ENCODE measurements at regions of chr10 and their contacts with region 1.

Region 1: DNA sequence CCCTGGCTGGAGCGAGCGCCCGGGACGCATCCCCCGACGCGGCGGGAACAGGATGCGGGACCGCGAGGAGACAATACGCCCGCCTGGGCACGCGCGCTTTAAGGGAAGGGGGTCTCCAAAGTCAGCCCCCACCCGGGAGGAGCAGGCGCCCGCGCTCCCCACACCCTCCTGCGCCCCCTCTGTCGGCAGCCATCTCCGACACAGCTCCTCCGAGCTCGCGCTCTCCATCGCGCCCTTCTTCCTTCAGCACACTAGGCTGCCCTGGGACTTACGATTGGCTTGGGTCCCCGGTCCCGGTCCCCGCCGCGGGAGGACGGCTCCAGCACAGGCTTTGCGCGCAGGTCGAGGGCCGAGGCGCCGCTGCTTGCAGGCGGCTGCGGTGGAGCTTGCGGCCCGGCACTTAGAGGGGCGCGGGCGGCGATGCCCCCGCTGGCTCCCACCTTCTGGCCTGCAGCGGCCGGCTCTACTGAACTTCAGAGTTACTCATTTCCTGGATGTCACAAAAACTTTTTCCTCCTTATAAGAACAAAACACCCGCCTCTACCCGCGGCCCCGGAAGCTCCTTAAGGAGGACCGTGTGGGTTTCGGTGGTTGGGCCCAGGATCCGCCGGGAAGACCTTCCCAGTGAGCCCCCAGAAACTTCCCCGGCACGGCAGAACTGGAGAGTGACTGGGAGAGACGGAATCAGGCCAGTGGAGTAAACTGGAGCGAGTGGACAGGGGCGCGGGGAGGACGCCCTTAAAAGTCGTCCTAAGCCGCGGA is at the start of gene ITPRIP:
- DNase-seq: peak; percentile 78
- H3K4me3 Mint-ChIP-seq: peak within 1 kb of the TSS; percentile 84
- H3K27ac Mint-ChIP-seq: peak within 1 kb of the TSS; percentile 98
- H3K4me1 Mint-ChIP-seq: peaks cover 46% of the 10 kb centered on the region
- H3K27me3 Mint-ChIP-seq: no peaks in the 10 kb centered on the region
- total RNA-seq, gene ITPRIP: 24.5 to 25.3 TPM

Region 2: DNA sequence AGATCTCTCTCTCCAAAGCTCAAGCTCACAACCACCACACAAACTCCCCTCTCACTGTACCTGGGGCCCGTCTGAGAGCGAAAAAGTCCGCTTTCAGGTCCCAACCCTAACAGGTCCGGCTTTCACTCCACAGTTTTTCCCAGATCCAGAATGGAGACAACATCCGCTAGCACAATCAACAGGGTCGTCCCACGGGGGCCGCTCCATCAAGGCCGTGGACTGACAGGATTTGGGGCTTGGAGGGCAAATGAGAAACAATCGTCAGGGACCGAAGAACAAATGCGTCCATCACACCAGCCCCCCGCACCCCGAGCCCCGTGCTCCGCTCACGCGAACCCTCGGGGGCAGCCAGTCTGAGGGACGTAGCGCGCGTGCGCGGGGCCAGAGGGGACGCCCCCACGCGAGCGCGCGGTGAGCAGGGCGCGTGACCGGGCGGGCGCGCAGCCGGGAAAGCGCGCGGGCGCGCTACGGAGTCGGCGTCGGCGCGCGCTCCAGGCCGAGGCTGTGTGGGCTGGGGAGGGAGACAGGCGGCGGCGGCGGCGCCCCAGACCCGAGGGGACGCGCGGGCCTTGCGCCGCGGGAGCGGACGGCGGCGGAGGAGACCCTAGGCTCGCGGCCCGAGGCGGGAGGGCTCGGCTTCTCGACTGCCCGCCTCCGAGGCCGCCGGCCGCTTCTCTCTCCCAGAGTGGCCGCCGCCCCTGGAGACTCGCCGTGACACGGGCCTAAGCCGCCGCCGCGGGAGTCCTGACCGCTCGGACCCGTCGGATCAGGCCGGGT is 371.3 kb before region 1 on chr10 and contains the start of gene SLK:
- CTCF ChIA-PET with region 1: no interaction called
- intact Hi-C with region 1: loop called (anchors 1 kb)
- DNase-seq: peak; percentile 76
- H3K4me3 Mint-ChIP-seq: peak within 1 kb of the TSS; percentile 99
- H3K27ac Mint-ChIP-seq: peak within 1 kb of the TSS; percentile 92
- H3K4me1 Mint-ChIP-seq: peaks cover 26% of the 10 kb centered on the region
- H3K27me3 Mint-ChIP-seq: no peaks in the 10 kb centered on the region
- total RNA-seq, gene SLK: 16.0 to 16.1 TPM

Region 3: GRCh38 chr10:104254493-104255310 is 83.5 kb before region 1 on chr10 and contains the start of gene GSTO1:
- CTCF ChIA-PET with region 1: no interaction called
- intact Hi-C with region 1: no loop called
- DNase-seq: peak; percentile 72
- H3K4me3 Mint-ChIP-seq: peak within 1 kb of the TSS; percentile 99
- H3K27ac Mint-ChIP-seq: peak within 1 kb of the TSS; percentile 99
- H3K4me1 Mint-ChIP-seq: peaks cover 52% of the 10 kb centered on the region
- H3K27me3 Mint-ChIP-seq: peaks cover 4% of the 10 kb centered on the region
- total RNA-seq, gene GSTO1: 197 to 201 TPM

Region 4: GRCh38 chr10:104300736-104301292 is 37.3 kb before region 1 on chr10:
- CTCF ChIA-PET with region 1: interaction called, 67 read pairs
- intact Hi-C with region 1: loop called (anchors 1 kb)
- DNase-seq: peak; percentile 67
- H3K4me3 Mint-ChIP-seq: peak overlapping the region; percentile 64
- H3K27ac Mint-ChIP-seq: peak overlapping the region; percentile 78
- H3K4me1 Mint-ChIP-seq: peaks cover 36% of the 10 kb centered on the region
- H3K27me3 Mint-ChIP-seq: peaks cover under 1% of the 10 kb centered on the region

Region 5: GRCh38 chr10:104322416-104322782 is 15.8 kb before region 1 on chr10:
- CTCF ChIA-PET with region 1: interaction called, 5 read pairs
- intact Hi-C with region 1: loop called (anchors 2 kb)
- DNase-seq: peak; percentile 79
- H3K4me3 Mint-ChIP-seq: peak overlapping the region; percentile 20
- H3K27ac Mint-ChIP-seq: peak overlapping the region; percentile 81
- H3K4me1 Mint-ChIP-seq: peaks cover 94% of the 10 kb centered on the region
- H3K27me3 Mint-ChIP-seq: no peaks in the 10 kb centered on the region

Measured in activated naive CD4-positive, alpha-beta T cell treated with anti-CD3 and anti-CD28 coated beads for 36 hours (primary cell).